ENCODE measurements at regions of chr11 and their contacts with region 1.

Region 1: DNA sequence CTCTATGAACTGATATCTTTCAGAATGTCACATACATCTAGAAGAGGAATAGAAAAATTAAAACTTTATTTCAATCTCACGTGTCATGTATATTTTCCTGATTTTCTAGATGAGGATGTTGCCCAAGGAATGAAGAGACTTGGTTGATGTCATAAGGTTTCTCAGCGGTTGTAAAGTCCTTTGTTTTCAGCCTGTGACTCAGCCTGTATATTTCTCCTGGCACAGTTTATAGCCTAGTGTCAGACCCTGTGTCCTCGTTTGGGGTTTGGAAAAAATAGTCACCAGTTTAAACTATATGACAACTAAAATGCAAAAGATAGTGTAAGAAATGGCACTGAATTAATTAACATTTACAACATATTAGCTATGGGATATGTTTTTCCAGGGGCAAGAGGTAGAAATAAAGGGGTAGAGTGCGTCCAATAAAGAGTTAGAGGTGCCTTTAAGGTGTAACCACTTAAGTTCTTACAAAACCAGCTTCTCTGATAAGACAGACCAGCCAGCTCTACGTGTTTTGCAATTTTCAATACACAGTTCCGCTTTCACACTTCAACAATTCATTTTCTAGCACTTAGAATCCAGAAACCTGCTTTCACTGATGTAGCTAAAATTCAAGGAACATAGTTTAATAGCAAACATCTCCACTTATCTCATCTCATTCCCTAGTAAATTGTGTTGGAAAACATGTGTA is 1432.6 kb upstream of the TENM4 start:
- DNase-seq: peak; percentile 72
- H3K4me3 Mint-ChIP-seq: peak overlapping the region; percentile 4
- H3K27ac Mint-ChIP-seq: peak overlapping the region; percentile 21
- H3K4me1 Mint-ChIP-seq: peaks cover 11% of the 10 kb centered on the region
- H3K27me3 Mint-ChIP-seq: no peaks in the 10 kb centered on the region
- CTCF ChIP-seq: no peak

Region 2: DNA sequence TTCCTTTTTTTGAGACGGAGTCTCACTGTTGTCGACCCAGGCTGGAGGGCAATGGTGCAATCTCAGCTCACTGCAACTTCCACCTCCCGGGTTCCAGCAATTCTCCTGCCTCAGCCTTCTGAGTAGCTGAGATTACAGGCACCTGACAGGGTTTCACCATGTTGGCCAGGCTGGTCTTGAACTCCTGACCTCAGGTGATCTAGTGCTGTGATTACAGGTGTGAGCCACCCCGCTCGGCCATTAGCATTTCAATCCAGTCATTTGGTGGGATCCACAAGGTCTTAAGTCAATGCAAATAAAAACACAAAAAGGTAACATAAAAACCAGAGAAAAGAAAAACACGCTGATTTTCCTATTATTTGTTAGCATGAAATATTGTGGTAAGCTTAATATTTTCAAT is 205.4 kb before region 1 on chr11:
- CTCF ChIA-PET with region 1: no interaction called
- POLR2A ChIA-PET with region 1: no interaction called
- intact Hi-C with region 1: no loop called
- DNase-seq: no peak
- H3K4me3 Mint-ChIP-seq: no peak overlapping the region
- H3K27ac Mint-ChIP-seq: no peak overlapping the region
- H3K4me1 Mint-ChIP-seq: no peaks in the 10 kb centered on the region
- H3K27me3 Mint-ChIP-seq: no peaks in the 10 kb centered on the region
- CTCF ChIP-seq: no peak

Region 3: DNA sequence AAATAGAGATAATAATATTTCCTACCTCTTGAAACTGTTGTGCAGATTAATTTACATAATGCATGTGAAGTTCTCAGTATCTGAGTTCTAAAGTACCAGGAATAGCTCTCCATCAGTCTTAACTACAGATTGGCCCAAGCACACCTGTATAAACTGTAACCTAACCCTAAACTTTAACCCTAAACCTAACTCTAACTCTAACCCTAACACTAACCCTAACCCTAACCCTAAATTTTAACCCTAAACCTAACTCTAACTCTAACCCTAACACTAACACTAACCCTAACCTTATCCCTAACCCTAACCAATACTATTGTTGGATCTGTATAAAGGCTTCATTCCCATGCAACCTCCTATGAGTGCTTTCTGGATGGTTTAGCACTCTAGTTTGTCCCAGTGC is 13.2 kb after region 1 on chr11:
- CTCF ChIA-PET with region 1: interaction called, 5 read pairs
- POLR2A ChIA-PET with region 1: interaction called, 13 read pairs
- intact Hi-C with region 1: no loop called
- DNase-seq: no peak
- H3K4me3 Mint-ChIP-seq: no peak overlapping the region
- H3K27ac Mint-ChIP-seq: no peak overlapping the region
- H3K4me1 Mint-ChIP-seq: no peaks in the 10 kb centered on the region
- H3K27me3 Mint-ChIP-seq: no peaks in the 10 kb centered on the region
- CTCF ChIP-seq: no peak

Region 4: DNA sequence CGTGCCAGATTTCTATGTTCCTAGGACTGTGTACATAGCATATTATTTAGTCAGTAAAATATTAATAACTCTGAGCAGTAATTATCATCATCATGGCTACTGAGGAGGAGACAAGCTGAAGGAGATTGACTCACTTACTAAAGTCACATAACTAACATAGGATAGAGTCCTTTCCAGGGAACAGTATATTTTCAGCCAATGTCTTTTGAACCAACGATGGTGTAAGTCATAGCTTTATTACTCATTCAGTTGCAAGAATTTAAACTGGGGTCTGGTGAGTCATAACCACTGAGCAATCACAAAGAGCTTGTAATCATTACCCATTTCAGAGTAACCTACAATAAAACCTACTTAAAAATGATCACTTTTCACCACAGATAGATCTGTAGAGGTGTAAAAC is 132.1 kb after region 1 on chr11:
- CTCF ChIA-PET with region 1: no interaction called
- POLR2A ChIA-PET with region 1: no interaction called
- intact Hi-C with region 1: no loop called
- DNase-seq: peak; percentile 88
- H3K4me3 Mint-ChIP-seq: no peak overlapping the region
- H3K27ac Mint-ChIP-seq: peak overlapping the region; percentile 16
- H3K4me1 Mint-ChIP-seq: peaks cover 15% of the 10 kb centered on the region
- H3K27me3 Mint-ChIP-seq: no peaks in the 10 kb centered on the region
- CTCF ChIP-seq: no peak